Naive thymus-derived CD4-positive, alpha-beta T cell (primary cell): ENCODE measurements at regions of chr5 and their contacts with region 1.

Region 1: GRCh38 chr5:43066799-43067741 is 27.0 kb upstream of the ANXA2R start:
- DNase-seq: peak; percentile 80 to 96 (median 89)
- ATAC-seq: peak; percentile 69
- H3K4me3 ChIP-seq: peak overlapping the region; percentile 82
- H3K4me3 Mint-ChIP-seq: peak overlapping the region; percentile 93 to 100 (median 98)
- H3K27ac ChIP-seq: peak overlapping the region; percentile 90
- H3K27ac Mint-ChIP-seq: peak overlapping the region; percentile 99 to 100 (median 99)
- H3K4me1 ChIP-seq: peaks cover 25 to 33% of the 10 kb centered on the region in 2 donors
- H3K4me1 Mint-ChIP-seq: peaks cover 26 to 67% (median 44%) of the 10 kb centered on the region in 7 donors
- H3K27me3 ChIP-seq: no peaks in the 10 kb centered on the region
- H3K27me3 Mint-ChIP-seq: no peaks in the 10 kb centered on the region

Region 2: GRCh38 chr5:41903892-41904799 is 1162.9 kb before region 1 on chr5 and contains the start of gene RIMOC1:
- CTCF ChIA-PET with region 1: no interaction called
- POLR2A ChIA-PET with region 1: interaction called, 5 read pairs
- intact Hi-C with region 1: loop called in 1 of 2 experiments (anchors 1 kb)
- DNase-seq: peak; percentile 94 to 98 (median 97)
- ATAC-seq: peak; percentile 94
- H3K4me3 ChIP-seq: peak within 1 kb of the TSS; percentile 90
- H3K4me3 Mint-ChIP-seq: peak within 1 kb of the TSS; percentile 84 to 99 (median 98)
- H3K27ac ChIP-seq: peak within 1 kb of the TSS; percentile 85
- H3K27ac Mint-ChIP-seq: peak within 1 kb of the TSS; percentile 97 to 100 (median 99)
- H3K4me1 ChIP-seq: peaks cover 16 to 18% of the 10 kb centered on the region in 2 donors
- H3K4me1 Mint-ChIP-seq: peaks cover 21 to 54% (median 46%) of the 10 kb centered on the region in 7 donors
- H3K27me3 ChIP-seq: no peaks in the 10 kb centered on the region
- H3K27me3 Mint-ChIP-seq: peaks cover 0 to 11% (median 0%) of the 10 kb centered on the region in 5 donors
- total RNA-seq, gene RIMOC1: 13.8 to 40.6 (median 27.5) TPM

Region 3: GRCh38 chr5:43008369-43009153 is 58.5 kb before region 1 on chr5:
- CTCF ChIA-PET with region 1: interaction called, 16 read pairs
- POLR2A ChIA-PET with region 1: interaction called, 211 read pairs
- intact Hi-C with region 1: loop called (anchors 1 kb)
- DNase-seq: peak; percentile 79 to 95 (median 90)
- ATAC-seq: peak; percentile 78
- H3K4me3 ChIP-seq: peak overlapping the region; percentile 72
- H3K4me3 Mint-ChIP-seq: peak overlapping the region; percentile 85 to 98 (median 92)
- H3K27ac ChIP-seq: peak overlapping the region; percentile 92
- H3K27ac Mint-ChIP-seq: peak overlapping the region; percentile 96 to 100 (median 98)
- H3K4me1 ChIP-seq: peaks cover 22 to 24% of the 10 kb centered on the region in 2 donors
- H3K4me1 Mint-ChIP-seq: peaks cover 17 to 47% (median 29%) of the 10 kb centered on the region in 7 donors
- H3K27me3 ChIP-seq: no peaks in the 10 kb centered on the region
- H3K27me3 Mint-ChIP-seq: peaks cover 0 to 4% (median 0%) of the 10 kb centered on the region in 5 donors

Region 4: DNA sequence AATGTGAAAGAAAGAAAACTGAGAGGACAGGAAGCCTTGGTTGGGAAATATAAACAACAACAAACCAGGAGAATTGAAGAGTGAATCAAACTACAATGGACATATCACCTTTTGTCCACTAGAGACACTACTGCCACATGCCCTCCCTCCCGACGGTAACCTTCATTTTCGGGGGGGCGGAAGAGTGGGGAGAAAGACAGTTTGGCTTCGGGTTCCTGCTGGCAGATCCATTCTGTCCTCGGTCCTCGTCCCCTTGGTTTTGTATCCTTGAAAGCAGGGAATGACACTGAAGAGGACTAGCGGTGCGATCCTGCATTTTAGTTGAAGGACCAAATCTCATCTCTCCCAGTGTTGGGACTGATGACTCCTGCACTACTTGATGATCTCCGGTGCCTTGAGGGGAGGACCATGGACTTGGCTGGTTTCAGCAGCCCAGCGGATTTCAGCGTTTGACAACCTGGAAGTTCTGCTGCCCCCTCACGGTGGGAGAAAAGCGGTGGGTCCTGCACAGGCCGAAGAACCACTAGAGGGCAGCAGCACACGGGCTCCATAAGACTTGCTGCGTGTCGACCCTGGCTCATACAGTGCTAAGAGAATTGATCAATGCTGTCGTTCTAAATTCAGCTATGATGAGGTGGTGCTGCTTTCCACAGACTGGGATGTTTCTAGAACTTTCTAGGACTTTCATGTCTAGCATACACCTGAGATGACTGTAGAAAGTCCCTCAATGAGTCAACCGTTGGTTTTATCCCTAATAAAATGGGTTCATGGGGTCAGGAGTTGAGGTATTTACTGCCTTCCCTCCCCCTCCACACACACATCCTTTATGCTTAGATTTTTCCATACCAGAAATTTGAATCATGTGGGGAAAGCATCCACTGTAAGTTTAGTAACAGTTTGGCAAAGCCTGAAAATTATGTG is 38.6 kb after region 1 on chr5:
- CTCF ChIA-PET with region 1: interaction called, 6 read pairs
- POLR2A ChIA-PET with region 1: interaction called, 63 read pairs
- intact Hi-C with region 1: loop called (anchors 1 kb)
- DNase-seq: peak; percentile 75 to 90 (median 85)
- ATAC-seq: peak; percentile 99
- H3K4me3 ChIP-seq: peak overlapping the region; percentile 66
- H3K4me3 Mint-ChIP-seq: peak overlapping the region; percentile 77 to 93 (median 89)
- H3K27ac ChIP-seq: peak overlapping the region; percentile 59
- H3K27ac Mint-ChIP-seq: peak overlapping the region; percentile 43 to 92 (median 88)
- H3K4me1 ChIP-seq: peaks cover 6 to 22% of the 10 kb centered on the region in 2 donors
- H3K4me1 Mint-ChIP-seq: peaks cover 21 to 49% (median 38%) of the 10 kb centered on the region in 7 donors
- H3K27me3 ChIP-seq: no peaks in the 10 kb centered on the region
- H3K27me3 Mint-ChIP-seq: no peaks in the 10 kb centered on the region

Region 5: GRCh38 chr5:43268188-43268820 is 201.2 kb after region 1 on chr5:
- CTCF ChIA-PET with region 1: no interaction called
- POLR2A ChIA-PET with region 1: no interaction called
- intact Hi-C with region 1: no loop called
- DNase-seq: no peak
- ATAC-seq: no peak
- H3K4me3 ChIP-seq: no peak overlapping the region
- H3K4me3 Mint-ChIP-seq: no peak overlapping the region
- H3K27ac ChIP-seq: no peak overlapping the region
- H3K27ac Mint-ChIP-seq: no peak overlapping the region
- H3K4me1 ChIP-seq: no peaks in the 10 kb centered on the region
- H3K4me1 Mint-ChIP-seq: peaks cover 0 to 10% (median 2%) of the 10 kb centered on the region in 7 donors
- H3K27me3 ChIP-seq: no peaks in the 10 kb centered on the region
- H3K27me3 Mint-ChIP-seq: peaks cover 18 to 41% (median 36%) of the 10 kb centered on the region in 5 donors

Region 6: DNA sequence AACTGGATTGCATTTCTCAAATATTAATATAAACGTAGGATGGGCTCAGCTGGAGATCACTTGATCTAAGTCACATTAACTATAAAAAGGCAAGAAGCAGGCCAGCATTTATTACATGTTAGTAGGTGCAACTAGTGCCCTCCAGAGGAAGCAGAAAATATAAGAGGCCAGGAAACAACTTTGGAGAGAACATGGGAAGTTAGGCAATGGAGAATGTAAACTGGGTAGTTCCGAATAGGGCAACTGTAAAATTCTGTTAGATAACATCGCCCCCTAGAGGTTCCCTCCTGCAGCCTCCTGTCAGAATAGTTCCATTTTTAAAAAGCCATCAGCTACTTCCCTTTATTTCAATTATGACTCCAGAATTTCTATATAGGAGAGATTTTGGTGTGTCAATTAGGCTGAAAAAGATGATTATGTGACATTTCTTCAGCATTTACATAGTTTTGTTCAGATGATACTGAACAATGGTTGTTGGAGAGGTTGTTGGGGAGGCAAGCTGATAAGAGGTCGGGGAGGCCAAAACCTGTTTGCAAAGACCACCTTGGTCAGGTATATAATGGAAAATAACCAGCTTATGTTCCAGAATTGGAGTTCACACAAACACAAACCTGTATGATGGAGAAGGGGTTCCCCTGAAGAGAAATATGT is 322.7 kb after region 1 on chr5:
- CTCF ChIA-PET with region 1: no interaction called
- POLR2A ChIA-PET with region 1: no interaction called
- intact Hi-C with region 1: loop called (anchors 2 kb)
- DNase-seq: peak in 8 of 9 donors; percentile 28 to 60 (median 50)
- ATAC-seq: peak; percentile 92
- H3K4me3 ChIP-seq: no peak overlapping the region
- H3K4me3 Mint-ChIP-seq: no peak overlapping the region
- H3K27ac ChIP-seq: no peak overlapping the region
- H3K27ac Mint-ChIP-seq: peak overlapping the region in 2 of 9 donors; percentile 62 to 67
- H3K4me1 ChIP-seq: peaks cover 0 to 7% of the 10 kb centered on the region in 2 donors
- H3K4me1 Mint-ChIP-seq: peaks cover 4 to 48% (median 34%) of the 10 kb centered on the region in 7 donors
- H3K27me3 ChIP-seq: no peaks in the 10 kb centered on the region
- H3K27me3 Mint-ChIP-seq: no peaks in the 10 kb centered on the region

Region 7: DNA sequence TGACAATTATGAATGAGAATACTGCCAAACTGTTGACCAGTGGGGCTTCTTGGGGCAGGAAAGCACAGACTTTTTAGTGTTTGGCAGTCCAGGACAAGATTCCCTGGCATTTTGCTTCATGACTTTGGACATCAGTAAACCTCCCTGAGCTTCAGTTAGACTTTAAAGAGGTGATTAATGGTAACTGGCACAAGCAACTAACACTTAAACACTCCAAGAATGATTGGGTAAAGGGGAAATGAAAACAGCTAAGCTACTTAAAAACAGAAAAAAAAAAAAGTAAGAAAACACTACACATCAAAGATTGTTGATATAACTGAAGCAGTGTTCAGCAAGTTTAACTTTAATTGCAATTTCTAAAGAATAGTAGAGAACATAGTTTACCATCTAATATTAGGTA is 476.4 kb after region 1 on chr5:
- CTCF ChIA-PET with region 1: no interaction called
- POLR2A ChIA-PET with region 1: no interaction called
- intact Hi-C with region 1: no loop called
- DNase-seq: no peak
- ATAC-seq: no peak
- H3K4me3 ChIP-seq: no peak overlapping the region
- H3K4me3 Mint-ChIP-seq: no peak overlapping the region
- H3K27ac ChIP-seq: no peak overlapping the region
- H3K27ac Mint-ChIP-seq: peak overlapping the region in 2 of 9 donors; percentile 17 to 34
- H3K4me1 ChIP-seq: no peaks in the 10 kb centered on the region
- H3K4me1 Mint-ChIP-seq: peaks cover 7 to 32% (median 16%) of the 10 kb centered on the region in 7 donors
- H3K27me3 ChIP-seq: no peaks in the 10 kb centered on the region
- H3K27me3 Mint-ChIP-seq: no peaks in the 10 kb centered on the region

Region 8: DNA sequence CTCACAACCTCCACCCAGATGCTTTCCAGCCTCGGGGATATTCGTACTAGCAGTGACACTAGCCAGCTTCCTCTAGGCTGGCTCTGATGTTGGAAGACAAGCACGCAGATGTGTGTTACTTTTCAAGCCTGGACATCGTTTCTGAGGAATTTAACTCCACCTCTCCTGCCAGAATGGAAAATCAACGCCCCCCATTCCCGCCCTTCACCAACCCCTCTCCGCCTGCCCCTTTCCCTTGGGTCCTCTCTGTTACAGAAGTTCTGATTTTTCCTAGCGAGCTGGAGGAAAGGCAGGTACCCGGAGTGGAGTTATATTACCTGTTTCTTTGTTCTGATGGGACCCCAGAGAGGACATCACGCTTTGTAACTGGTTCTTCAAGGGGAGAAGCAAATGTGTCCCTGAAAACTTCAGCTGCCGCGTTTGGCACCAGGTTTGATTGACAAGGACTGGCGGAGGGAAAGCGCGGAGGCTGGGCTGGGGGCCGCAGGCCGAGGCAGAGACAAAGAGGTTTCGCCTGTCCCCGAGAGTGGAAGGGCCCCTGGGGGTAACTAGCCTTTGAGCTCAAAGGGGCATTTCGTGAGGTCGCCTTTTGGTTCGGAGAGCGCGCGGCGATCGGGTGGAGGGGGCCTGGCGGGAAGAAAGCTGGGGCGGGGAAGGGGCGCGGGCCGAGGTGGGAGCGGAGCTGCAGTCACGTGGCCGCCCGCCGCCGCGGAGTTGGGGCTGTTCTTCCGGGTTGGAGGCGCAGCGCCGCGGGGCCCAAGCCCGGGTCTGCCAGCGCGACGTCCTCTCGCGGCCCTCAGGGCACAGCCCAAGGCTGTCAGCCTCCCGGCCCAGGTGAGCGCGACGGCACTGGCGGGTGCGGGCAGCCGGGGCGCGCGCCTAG is 535.6 kb after region 1 on chr5 and contains the start of gene NNT:
- CTCF ChIA-PET with region 1: no interaction called
- POLR2A ChIA-PET with region 1: interaction called, 6 read pairs
- intact Hi-C with region 1: loop called (anchors 1 to 2 kb)
- DNase-seq: peak; percentile 71 to 85 (median 78)
- ATAC-seq: peak; percentile 85
- H3K4me3 ChIP-seq: peak within 1 kb of the TSS; percentile 78
- H3K4me3 Mint-ChIP-seq: peak within 1 kb of the TSS; percentile 90 to 99 (median 94)
- H3K27ac ChIP-seq: peak within 1 kb of the TSS; percentile 87
- H3K27ac Mint-ChIP-seq: peak within 1 kb of the TSS; percentile 86 to 98 (median 93)
- H3K4me1 ChIP-seq: peaks cover 6 to 14% of the 10 kb centered on the region in 2 donors
- H3K4me1 Mint-ChIP-seq: peaks cover 26 to 72% (median 60%) of the 10 kb centered on the region in 7 donors
- H3K27me3 ChIP-seq: no peaks in the 10 kb centered on the region
- H3K27me3 Mint-ChIP-seq: no peaks in the 10 kb centered on the region
- total RNA-seq, gene NNT: 42.5 to 73.5 (median 60.7) TPM